Activated B cell treated with CpG ODN at 0.5 μM for 24 hours (primary cell): ENCODE measurements at regions of chr11 and their contacts with region 1.

Region 1: GRCh38 chr11:117081908-117082307 is 16.3 kb downstream of the SIK3 start:
- DNase-seq: no peak
- ATAC-seq: no peak
- H3K4me3 Mint-ChIP-seq: no peak overlapping the region
- H3K27ac Mint-ChIP-seq: no peak overlapping the region
- H3K4me1 Mint-ChIP-seq: peaks cover 71% of the 10 kb centered on the region
- H3K27me3 Mint-ChIP-seq: no peaks in the 10 kb centered on the region
- CTCF ChIP-seq: no peak

Region 2: GRCh38 chr11:117092951-117093590 is 11.2 kb after region 1 on chr11:
- CTCF ChIA-PET with region 1: interaction called, 3 read pairs
- POLR2A ChIA-PET with region 1: interaction called, 6 read pairs
- intact Hi-C with region 1: loop called (anchors 1 kb)
- DNase-seq: no peak
- ATAC-seq: peak; percentile 11
- H3K4me3 Mint-ChIP-seq: peak overlapping the region; percentile 64
- H3K27ac Mint-ChIP-seq: peak overlapping the region; percentile 76
- H3K4me1 Mint-ChIP-seq: peaks cover 81% of the 10 kb centered on the region
- H3K27me3 Mint-ChIP-seq: no peaks in the 10 kb centered on the region
- CTCF ChIP-seq: no peak